SK-N-SH (cell line): ENCODE measurements at regions of chr22 and their contacts with region 1.

Region 1: DNA sequence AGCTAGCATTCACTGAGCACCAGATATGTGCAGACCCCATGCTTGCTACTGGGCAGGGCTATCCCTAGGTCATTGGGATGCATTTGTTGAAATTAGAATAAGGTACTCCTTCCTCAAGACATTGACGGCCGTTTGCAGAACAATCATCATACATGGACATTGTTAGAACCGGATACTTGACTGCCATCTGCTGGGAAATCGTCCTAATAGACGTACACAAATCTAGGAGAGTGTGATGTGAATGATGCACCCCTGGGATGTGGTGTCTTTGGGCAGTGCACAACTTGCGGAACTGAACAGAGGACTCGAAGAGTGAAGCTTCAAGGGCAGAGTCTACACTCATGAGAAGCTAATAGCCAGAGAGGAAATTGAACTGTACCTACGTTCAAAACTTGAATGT is 35.9 kb downstream of the MYO18B start:
- DNase-seq: peak; percentile 74
- H3K4me3 ChIP-seq: no peak overlapping the region
- H3K27ac ChIP-seq: no peak overlapping the region
- H3K4me1 ChIP-seq: peaks cover 0 to 45% of the 10 kb centered on the region in 2 experiments; a peak in 2 of 4 replicates
- H3K27me3 ChIP-seq: no peaks in the 10 kb centered on the region
- CTCF ChIP-seq: peak; percentile 50
- EP300 ChIP-seq: no peak
- RAD21 ChIP-seq: peak; percentile 65

Region 2: DNA sequence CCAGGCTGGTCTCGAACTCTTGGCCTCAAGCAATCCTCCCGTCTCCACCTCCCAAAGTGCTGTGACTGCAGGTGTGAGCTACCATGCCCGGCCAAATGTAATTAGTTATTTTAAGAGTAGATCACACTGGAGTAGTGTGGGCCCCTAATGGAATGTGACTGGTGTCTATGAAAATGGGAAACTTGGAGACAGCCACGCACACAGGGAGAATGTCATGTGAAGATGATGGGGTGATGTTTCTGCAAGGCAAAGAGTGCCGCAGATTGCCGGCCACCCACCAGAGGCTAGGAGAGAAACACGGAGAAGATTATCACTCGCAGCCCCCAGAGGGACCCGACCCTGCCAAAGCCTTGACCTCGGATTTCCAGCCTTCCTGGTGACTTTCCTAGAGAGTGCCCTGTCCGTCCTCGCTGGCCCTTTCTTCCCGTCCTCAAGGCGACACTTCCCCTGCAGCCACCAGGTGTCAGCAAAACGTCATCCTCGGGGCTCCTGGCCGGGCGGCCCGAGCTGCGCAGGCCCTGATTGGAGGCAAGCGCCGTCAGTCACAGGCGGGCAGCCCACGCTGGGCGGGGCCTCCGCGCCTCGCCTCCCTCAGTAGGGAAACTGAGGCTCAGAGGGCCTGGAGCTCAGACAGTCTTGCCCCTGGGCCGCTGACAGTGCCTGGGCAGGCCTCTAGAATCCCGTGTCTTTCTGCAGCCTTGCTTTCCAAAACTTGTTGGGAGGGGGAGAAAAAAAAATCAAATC is 542.2 kb before region 1 on chr22:
- CTCF ChIA-PET with region 1: interaction called, 52 read pairs
- POLR2A ChIA-PET with region 1: no interaction called
- DNase-seq: peak; percentile 100
- H3K4me3 ChIP-seq: peak overlapping the region in 1 of 2 experiments; percentile 38; a peak in 3 of 4 replicates
- H3K27ac ChIP-seq: no peak overlapping the region
- H3K4me1 ChIP-seq: peaks cover 0 to 4% of the 10 kb centered on the region in 2 experiments; a peak in 1 of 4 replicates
- H3K27me3 ChIP-seq: no peaks in the 10 kb centered on the region
- CTCF ChIP-seq: peak; percentile 72
- EP300 ChIP-seq: no peak
- RAD21 ChIP-seq: peak; percentile 96

Region 3: GRCh38 chr22:25702040-25702439 is 75.8 kb before region 1 on chr22:
- CTCF ChIA-PET with region 1: interaction called, 44 read pairs
- POLR2A ChIA-PET with region 1: interaction called, 4 read pairs
- DNase-seq: peak; percentile 61
- H3K4me3 ChIP-seq: no peak overlapping the region
- H3K27ac ChIP-seq: peak overlapping the region in 1 of 2 experiments; percentile 93; a peak in 3 of 4 replicates
- H3K4me1 ChIP-seq: peaks cover 0 to 55% of the 10 kb centered on the region in 2 experiments; a peak in 2 of 4 replicates
- H3K27me3 ChIP-seq: no peaks in the 10 kb centered on the region
- CTCF ChIP-seq: peak; percentile 71
- EP300 ChIP-seq: peak in 1 of 2 experiments; percentile 74; a peak in 2 of 4 replicates
- RAD21 ChIP-seq: peak; percentile 90

Region 4: DNA sequence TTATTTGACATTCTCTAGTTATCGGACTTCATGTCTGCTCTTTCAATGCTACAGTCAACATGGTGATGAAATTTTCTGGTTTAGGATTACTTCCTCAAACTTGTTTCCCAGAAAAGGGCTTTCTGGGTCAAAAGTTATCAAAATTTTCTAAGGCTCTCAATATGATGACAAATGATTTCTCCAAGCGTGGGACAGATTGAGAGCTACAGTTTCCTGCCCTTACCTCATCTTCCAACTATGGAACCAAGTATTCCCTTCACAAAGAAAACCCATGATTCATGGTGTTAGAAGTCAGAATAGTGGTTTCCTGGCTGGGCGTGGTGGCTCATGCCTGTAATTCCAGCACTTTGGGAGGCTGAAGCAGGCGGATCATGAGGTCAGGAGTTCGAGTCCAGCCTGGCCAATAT is 18.0 kb before region 1 on chr22:
- CTCF ChIA-PET with region 1: interaction called, 65 read pairs
- POLR2A ChIA-PET with region 1: no interaction called
- DNase-seq: no peak
- H3K4me3 ChIP-seq: no peak overlapping the region
- H3K27ac ChIP-seq: peak overlapping the region in 1 of 2 experiments; percentile 80; a peak in 2 of 4 replicates
- H3K4me1 ChIP-seq: peaks cover 0 to 17% of the 10 kb centered on the region in 2 experiments; a peak in 2 of 4 replicates
- H3K27me3 ChIP-seq: no peaks in the 10 kb centered on the region
- CTCF ChIP-seq: no peak
- EP300 ChIP-seq: peak in 1 of 2 experiments; percentile 41; a peak in 1 of 4 replicates
- RAD21 ChIP-seq: no peak

Region 5: DNA sequence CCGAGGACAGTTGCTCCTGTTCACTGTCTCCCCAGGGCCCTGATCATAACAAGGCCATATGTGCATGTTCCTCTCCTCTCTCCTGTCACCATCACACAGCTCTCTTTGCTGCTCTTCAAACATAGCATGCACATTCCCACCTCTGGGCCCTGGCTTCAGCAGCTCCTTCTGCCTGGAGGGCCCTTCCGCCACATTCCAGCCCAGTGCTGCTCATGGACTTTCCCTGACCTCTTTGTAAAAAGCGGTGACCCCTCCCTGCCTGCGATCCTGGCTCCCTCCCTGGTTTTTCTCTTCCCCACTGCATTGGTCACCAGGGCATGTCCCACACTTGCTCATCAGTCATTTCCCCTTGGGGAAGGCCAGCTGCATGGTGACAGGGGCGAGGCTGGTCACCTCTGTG is 62.3 kb after region 1 on chr22:
- CTCF ChIA-PET with region 1: no interaction called
- POLR2A ChIA-PET with region 1: no interaction called
- DNase-seq: no peak
- H3K4me3 ChIP-seq: no peak overlapping the region
- H3K27ac ChIP-seq: no peak overlapping the region
- H3K4me1 ChIP-seq: peaks cover 0 to 7% of the 10 kb centered on the region in 2 experiments; a peak in 1 of 4 replicates
- H3K27me3 ChIP-seq: no peaks in the 10 kb centered on the region
- CTCF ChIP-seq: no peak
- EP300 ChIP-seq: no peak
- RAD21 ChIP-seq: no peak

Region 6: DNA sequence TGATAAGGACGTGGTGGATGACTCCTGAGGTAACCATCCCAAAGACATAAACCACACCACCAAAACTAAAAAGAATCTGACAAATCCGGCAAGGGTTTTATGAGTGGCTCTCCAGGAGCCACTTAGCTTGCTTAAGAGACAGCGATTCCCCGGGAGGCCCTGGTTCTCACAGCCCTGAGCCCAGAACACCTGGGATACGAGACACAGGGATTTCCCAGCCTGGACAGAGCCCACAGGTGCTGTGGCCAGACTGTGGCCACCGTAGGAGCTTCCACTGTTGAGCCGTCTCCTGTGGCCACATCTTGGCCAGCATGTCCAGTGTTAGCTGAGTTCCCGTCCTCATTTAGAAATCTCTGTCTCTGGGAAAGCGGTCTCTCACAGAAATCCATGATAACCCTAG is 579.9 kb after region 1 on chr22:
- CTCF ChIA-PET with region 1: interaction called, 19 read pairs
- POLR2A ChIA-PET with region 1: no interaction called
- DNase-seq: no peak
- H3K4me3 ChIP-seq: no peak overlapping the region
- H3K27ac ChIP-seq: no peak overlapping the region
- H3K4me1 ChIP-seq: peaks cover 0 to 7% of the 10 kb centered on the region in 2 experiments; a peak in 2 of 4 replicates
- H3K27me3 ChIP-seq: no peaks in the 10 kb centered on the region
- CTCF ChIP-seq: no peak
- EP300 ChIP-seq: no peak
- RAD21 ChIP-seq: no peak